Posterior vena cava (tissue), 2 donors: ENCODE measurements at regions of chr22 and their contacts with region 1.

Region 1: GRCh38 chr22:28594797-28595462 is 84.7 kb downstream of the TTC28 start:
- DNase-seq: no peak

Region 2: DNA sequence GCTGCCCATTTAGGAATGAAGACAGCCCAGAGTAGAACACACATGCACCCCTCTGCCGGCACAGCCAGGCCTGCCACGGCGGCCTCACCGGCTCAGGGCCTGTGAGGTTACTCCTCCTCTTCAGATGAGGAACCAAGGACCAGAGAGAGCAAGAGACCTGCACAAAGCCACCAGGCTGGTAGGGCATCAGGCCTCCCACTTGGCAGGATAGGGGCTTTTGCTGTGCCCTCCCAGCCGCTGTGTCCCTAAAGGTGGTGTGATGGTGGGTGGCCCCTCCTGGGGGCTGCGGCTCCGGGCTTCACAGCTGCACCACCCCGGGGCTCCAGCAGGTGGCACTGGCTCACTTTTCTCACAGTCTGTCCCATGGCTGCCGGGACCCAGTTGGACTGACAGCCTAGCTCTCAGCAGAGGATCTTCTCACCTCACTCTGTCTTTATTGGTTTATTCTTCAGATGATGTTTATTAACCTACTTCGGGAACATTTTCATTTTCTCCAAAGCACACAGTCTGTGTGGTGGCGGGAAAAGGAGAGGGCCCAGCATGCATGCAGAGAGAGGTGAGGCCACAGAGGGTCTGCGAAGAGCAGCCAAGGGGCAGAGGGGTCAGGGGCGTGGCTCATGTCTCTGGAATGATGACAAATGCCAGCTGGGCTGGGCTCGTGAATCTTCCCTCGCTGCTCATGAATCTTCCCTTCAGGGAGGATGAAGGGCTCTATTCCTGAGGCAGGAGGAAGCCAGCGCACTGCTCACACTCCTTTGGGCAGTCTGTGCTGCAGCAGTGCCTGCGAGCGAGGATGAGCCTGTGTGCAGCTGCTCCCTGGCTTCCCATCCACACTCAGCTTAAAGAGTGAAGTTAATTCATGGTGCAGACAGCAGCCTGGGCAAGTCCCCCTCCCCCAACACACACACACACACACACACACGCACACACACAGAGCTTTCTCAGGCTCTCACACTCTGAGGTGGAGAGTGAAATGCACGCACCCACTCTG is 574.8 kb before region 1 on chr22:
- intact Hi-C with region 1: loop called (anchors 10 kb)
- DNase-seq: peak; percentile 88

Region 3: GRCh38 chr22:28044546-28045173 is 550.3 kb before region 1 on chr22:
- intact Hi-C with region 1: loop called in 1 of 2 experiments (anchors 5 kb)
- DNase-seq: no peak

Region 4: DNA sequence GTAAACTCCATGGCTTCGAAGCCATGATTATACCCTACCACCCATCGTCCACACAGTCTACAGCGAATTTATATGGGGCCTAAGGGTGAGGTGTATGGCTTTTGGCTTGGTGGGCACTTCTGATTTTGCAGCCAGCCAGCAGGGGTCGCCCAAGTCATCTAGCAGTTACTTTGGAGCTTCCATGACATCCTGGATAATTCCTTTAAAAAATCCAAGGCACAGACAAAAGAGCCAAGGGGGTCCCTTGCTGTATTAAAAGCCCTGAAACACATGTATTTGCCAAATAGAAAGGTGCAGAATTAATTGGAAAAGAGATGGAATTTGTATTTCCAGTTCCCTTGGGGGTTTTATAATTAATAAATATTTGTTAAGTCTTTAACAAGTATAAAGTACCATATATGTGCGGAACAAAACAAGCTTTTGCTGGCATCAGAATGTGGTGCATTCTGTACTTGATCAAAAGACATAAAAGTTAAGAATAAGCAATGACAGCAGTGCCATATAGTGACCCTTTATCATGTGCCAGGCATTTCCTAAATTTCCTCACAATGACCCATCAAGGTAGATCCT is 543.1 kb before region 1 on chr22:
- intact Hi-C with region 1: loop called (anchors 5 kb)
- DNase-seq: peak; percentile 87

Region 5: GRCh38 chr22:28647216-28647615 is 52.3 kb after region 1 on chr22:
- intact Hi-C with region 1: no loop called
- DNase-seq: no peak

Region 6: DNA sequence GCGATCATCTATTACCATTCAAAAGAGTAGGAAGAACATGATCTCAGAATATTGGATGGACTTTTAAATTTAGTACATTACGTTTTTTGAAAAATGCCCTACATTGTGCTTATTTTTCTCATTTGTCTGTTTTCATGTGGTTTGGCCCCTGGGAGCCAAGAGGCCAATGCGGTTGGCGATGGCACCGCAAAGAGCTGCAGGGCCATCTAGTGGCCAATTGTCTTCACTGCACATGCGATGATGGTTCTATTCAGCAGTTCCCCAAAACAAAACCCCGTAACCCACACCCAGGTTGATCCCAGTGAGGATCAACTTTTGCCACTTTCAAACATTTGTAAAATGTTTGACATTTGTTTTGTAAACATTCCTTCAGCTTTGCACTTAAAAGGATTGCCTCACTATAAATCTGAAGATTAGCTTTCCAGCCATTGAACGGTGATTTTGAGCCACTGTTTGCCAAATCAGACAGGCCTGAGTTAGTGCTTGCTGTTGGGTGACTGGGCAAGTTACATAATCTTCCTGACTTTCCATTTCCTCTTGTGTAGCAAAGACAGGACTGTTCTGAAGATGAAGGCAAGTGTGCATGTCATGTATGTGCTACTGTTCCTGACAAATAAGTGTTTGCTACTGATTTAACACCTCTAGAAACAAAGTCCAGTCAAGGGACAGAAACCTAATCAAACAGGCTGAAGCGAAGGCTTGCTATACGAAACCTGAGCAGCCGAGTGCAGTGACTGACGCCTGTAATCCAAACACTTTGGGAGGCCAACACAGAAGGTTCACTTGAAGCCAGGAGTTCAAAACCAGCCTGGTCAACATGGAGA is 234.6 kb after region 1 on chr22:
- intact Hi-C with region 1: loop called in 1 of 2 experiments (anchors 5 kb)
- DNase-seq: peak; percentile 92

Region 7: DNA sequence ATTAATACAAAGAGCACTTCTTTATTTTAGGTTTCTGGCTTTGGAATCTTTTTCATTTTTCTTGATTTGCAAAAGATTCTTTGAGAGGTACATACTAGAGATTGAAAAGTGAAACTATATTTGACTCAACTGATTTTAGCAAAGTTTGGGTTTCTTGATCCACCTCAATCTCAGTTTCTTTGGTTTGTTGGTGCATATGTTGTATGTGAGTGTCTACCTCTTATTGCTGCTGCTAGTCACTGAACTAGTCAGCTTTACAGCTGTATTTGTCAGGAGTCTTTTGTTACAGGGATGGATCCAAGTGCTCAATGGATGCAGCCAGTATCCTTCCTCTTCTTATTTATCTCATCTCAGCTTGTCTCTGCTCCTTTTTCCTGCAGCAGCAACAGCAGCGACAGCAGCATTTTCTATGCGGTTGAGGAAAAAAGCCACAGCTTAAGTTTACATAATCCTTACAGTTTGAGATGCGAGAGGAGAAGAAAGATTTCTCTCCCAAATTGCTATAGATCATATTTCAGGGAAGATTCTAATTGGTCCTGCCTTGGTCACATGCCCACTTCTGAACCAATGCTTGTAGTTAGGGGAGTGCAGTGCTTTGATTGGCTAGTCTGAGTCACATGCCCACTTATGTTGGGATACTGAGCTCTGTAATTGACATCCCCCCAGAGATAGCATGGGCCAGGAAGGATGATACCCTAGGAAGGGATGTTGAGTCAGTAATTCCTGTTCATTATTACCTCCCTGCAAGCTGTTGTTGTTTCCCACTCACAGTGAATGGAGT is 278.4 kb after region 1 on chr22:
- intact Hi-C with region 1: no loop called
- DNase-seq: no peak